Ascending aorta (tissue), 2 donors: ENCODE measurements at regions of chr16 and their contacts with region 1.

Region 1: DNA sequence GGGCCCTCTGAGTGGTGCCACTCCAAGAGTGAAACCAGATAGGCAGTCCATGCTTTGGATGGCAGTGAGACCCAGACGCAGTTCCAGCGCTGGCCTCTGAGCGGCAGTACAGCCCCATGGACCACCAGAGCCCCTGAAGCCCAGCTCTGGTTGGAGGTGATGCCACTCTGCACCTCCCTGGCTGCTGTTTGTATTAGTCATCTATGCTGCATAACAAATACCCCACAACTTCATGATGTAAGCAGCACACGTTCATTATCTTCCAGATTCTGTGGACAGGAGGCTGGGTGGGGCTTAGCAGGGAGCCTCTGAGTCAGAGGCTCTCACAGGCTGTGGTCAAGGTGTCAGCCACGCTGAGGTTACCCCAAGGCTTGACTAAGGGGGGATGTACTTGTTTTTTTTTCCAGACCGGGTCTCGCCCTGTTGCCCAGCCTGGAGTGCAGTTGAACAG is 5.1 kb upstream of the NME4 start:
- DNase-seq: peak in 1 of 2 donors; percentile 70
- H3K4me3 ChIP-seq: no peak overlapping the region
- H3K27ac ChIP-seq: no peak overlapping the region
- H3K4me1 ChIP-seq: no peaks in the 10 kb centered on the region
- H3K27me3 ChIP-seq: no peaks in the 10 kb centered on the region
- CTCF ChIP-seq: peak; percentile 60 to 80 (median 66)

Region 2: GRCh38 chr16:278863-279366 is 113.0 kb before region 1 on chr16:
- intact Hi-C with region 1: no loop called
- DNase-seq: no peak
- H3K4me3 ChIP-seq: no peak overlapping the region
- H3K27ac ChIP-seq: no peak overlapping the region
- H3K4me1 ChIP-seq: peaks cover 10 to 11% of the 10 kb centered on the region in 2 donors
- H3K27me3 ChIP-seq: peaks cover 11% of the 10 kb centered on the region
- CTCF ChIP-seq: no peak

Region 3: GRCh38 chr16:489606-490005 is 97.7 kb after region 1 on chr16:
- intact Hi-C with region 1: loop called (anchors 5 kb)
- DNase-seq: no peak
- H3K4me3 ChIP-seq: no peak overlapping the region
- H3K27ac ChIP-seq: no peak overlapping the region
- H3K4me1 ChIP-seq: no peaks in the 10 kb centered on the region
- H3K27me3 ChIP-seq: no peaks in the 10 kb centered on the region
- CTCF ChIP-seq: no peak

Region 4: DNA sequence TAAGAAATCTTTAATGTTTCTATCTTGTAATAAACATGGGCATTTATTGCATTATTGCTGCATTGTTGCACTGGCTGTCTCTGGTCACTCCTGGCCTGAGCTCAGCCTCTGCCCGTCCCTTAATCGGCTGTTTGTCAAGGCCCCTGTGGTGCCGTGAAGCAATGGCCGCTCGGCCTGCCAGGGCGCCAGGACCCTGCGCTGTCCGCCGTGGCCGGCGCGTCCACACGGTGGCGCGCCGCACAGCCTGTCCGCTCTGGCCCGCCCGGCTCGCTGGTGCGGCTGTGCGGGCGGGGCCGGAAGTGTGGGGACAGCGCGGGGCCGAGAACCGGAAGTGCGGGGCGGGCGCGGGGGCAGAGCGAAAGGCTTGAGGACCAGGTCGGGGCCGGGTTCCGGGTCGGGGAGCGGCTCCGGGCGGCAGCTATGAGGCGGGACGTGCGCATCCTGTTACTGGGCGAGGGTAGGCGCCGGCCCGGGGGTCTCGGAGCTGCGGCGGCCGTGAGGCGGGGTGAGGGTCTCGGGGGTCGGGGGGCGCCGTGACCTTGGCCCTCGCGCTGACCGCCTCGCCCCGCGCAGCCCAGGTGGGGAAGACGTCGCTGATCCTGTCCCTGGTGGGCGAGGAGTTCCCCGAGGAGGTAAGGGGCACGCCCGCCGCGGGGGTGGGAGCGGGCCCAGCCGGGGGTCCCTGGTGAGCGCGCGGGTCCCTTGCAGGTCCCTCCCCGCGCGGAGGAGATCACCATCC is 276.0 kb after region 1 on chr16 and contains the start of gene RHOT2:
- intact Hi-C with region 1: loop called (anchors 10 kb)
- DNase-seq: peak; percentile 76 to 97
- H3K4me3 ChIP-seq: peak within 1 kb of the TSS; percentile 86 to 98
- H3K27ac ChIP-seq: peak within 1 kb of the TSS; percentile 85 to 88
- H3K4me1 ChIP-seq: peaks cover 0 to 14% of the 10 kb centered on the region in 2 donors
- H3K27me3 ChIP-seq: no peaks in the 10 kb centered on the region
- CTCF ChIP-seq: peak; percentile 50 to 95 (median 70)
- total RNA-seq, gene RHOT2: 41.8 TPM